GM12878 (cell line): ENCODE measurements at regions of chr9 and their contacts with region 1.

Region 1: DNA sequence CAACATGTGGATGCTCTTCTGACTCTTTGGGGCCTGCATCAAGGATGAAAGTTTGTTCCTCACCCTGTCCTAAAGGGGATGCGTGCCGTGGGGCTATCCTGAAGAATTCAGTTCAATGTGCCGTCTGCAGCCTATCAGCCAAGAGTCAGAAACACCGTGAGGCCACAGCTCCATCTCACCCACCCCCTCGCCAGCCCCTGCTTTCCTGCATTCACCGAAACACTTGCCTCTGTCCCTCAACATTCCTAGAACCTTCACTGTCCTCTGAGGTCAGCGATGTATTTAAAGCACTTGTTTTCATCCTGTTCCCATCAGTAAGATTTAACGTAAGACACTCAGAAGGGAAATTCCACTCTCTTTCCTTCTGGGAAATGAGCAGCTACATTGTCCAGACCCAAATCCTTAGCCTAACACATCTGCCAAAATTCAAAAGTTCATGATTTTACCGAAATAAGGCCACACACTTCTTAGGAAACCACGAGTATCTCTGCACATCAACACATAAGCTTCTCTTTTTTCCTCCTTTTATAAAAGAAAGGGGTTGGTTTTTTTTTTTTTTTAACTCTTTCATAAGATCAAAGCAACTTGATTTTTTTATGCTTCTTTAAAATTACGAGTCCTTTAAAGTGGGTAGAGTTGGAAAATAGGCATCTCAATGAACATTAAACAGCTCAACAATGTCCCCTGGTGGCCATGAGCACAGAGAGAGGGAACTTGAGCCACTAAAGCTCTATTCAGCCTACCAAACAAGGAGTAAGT is 100.7 kb downstream of the SUSD1 start:
- DNase-seq: peak; percentile 84
- ATAC-seq: peak; percentile 72
- H3K4me3 ChIP-seq: peak overlapping the region; percentile 4; the same call in 1 of the 2 replicates
- H3K27ac ChIP-seq: peak overlapping the region; percentile 73
- H3K4me1 ChIP-seq: peaks cover 66% of the 10 kb centered on the region
- H3K27me3 ChIP-seq: no peaks in the 10 kb centered on the region
- CTCF ChIP-seq: peak; percentile 91 to 97 (median 97)
- EP300 ChIP-seq: no peak
- POLR2A ChIP-seq: no peak
- RAD21 ChIP-seq: peak; percentile 99

Region 2: GRCh38 chr9:111759762-111760639 is 314.4 kb before region 1 on chr9:
- CTCF ChIA-PET with region 1: interaction called, 292 read pairs
- POLR2A ChIA-PET with region 1: interaction called, 5 read pairs
- RAD21 ChIA-PET with region 1: interaction called, 179 read pairs
- SMC1A ChIA-PET with region 1: interaction called, 226 read pairs
- in situ Hi-C with region 1: loop called (anchors 5 kb)
- intact Hi-C with region 1: loop called (anchors 1 kb)
- DNase-seq: peak; percentile 79
- ATAC-seq: peak; percentile 97
- H3K4me3 ChIP-seq: no peak overlapping the region
- H3K27ac ChIP-seq: no peak overlapping the region
- H3K4me1 ChIP-seq: no peaks in the 10 kb centered on the region
- H3K27me3 ChIP-seq: no peaks in the 10 kb centered on the region
- CTCF ChIP-seq: peak; percentile 51 to 73 (median 56); a peak in 4 of 6 replicates
- EP300 ChIP-seq: no peak
- POLR2A ChIP-seq: no peak
- RAD21 ChIP-seq: peak; percentile 95

Region 3: GRCh38 chr9:111916234-111916645 is 158.2 kb before region 1 on chr9:
- CTCF ChIA-PET with region 1: interaction called, 4 read pairs
- POLR2A ChIA-PET with region 1: interaction called, 3 read pairs
- RAD21 ChIA-PET with region 1: interaction called, 25 read pairs
- SMC1A ChIA-PET with region 1: interaction called, 27 read pairs
- in situ Hi-C with region 1: no loop called
- intact Hi-C with region 1: no loop called
- DNase-seq: no peak
- ATAC-seq: peak; percentile 67
- H3K4me3 ChIP-seq: peak overlapping the region; percentile 54; the same call in 1 of the 2 replicates
- H3K27ac ChIP-seq: peak overlapping the region; percentile 76
- H3K4me1 ChIP-seq: peaks cover 47% of the 10 kb centered on the region
- H3K27me3 ChIP-seq: no peaks in the 10 kb centered on the region
- CTCF ChIP-seq: no peak
- EP300 ChIP-seq: peak; percentile 42 to 60; a peak in 3 of 4 replicates
- POLR2A ChIP-seq: no peak
- RAD21 ChIP-seq: no peak

Region 4: DNA sequence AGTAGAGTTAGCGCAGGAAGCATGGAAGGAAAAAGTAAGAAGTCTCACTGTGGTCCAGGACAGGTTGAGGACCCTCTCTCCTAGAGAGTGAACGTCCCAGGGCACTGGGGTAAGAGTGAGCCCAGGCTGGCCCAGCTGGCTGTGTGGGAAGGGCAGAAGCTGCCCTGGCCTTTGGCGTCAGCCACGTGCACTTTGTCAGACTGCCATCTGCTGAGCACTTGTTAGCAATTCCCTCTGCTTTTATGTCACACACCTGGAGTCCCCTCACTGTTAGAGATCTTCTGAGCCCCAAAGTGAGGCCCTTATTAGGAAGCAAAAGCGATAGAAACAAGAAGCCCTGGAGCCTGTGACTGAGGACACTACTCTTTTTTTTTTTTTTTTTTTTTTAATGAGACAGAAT is 98.7 kb before region 1 on chr9:
- CTCF ChIA-PET with region 1: interaction called, 46 read pairs
- POLR2A ChIA-PET with region 1: interaction called, 3 read pairs
- RAD21 ChIA-PET with region 1: interaction called, 20 read pairs
- SMC1A ChIA-PET with region 1: interaction called, 22 read pairs
- in situ Hi-C with region 1: no loop called
- intact Hi-C with region 1: no loop called
- DNase-seq: peak; percentile 39
- ATAC-seq: peak; percentile 79
- H3K4me3 ChIP-seq: no peak overlapping the region
- H3K27ac ChIP-seq: no peak overlapping the region
- H3K4me1 ChIP-seq: peaks cover 12% of the 10 kb centered on the region
- H3K27me3 ChIP-seq: no peaks in the 10 kb centered on the region
- CTCF ChIP-seq: peak; percentile 4 to 51 (median 14); a peak in 2 of 6 replicates
- EP300 ChIP-seq: no peak
- POLR2A ChIP-seq: no peak
- RAD21 ChIP-seq: peak; percentile 57

Region 5: GRCh38 chr9:112020680-112021596 is 53.5 kb before region 1 on chr9:
- CTCF ChIA-PET with region 1: interaction called, 74 read pairs
- POLR2A ChIA-PET with region 1: no interaction called
- RAD21 ChIA-PET with region 1: interaction called, 339 read pairs
- SMC1A ChIA-PET with region 1: interaction called, 301 read pairs
- in situ Hi-C with region 1: no loop called
- intact Hi-C with region 1: no loop called
- DNase-seq: peak; percentile 80
- ATAC-seq: peak; percentile 68
- H3K4me3 ChIP-seq: peak overlapping the region; percentile 10; the same call in 1 of the 2 replicates
- H3K27ac ChIP-seq: peak overlapping the region; percentile 63
- H3K4me1 ChIP-seq: peaks cover 33% of the 10 kb centered on the region
- H3K27me3 ChIP-seq: no peaks in the 10 kb centered on the region
- CTCF ChIP-seq: no peak
- EP300 ChIP-seq: peak; percentile 69 to 75; a peak in 3 of 4 replicates
- POLR2A ChIP-seq: no peak
- RAD21 ChIP-seq: no peak

Region 6: GRCh38 chr9:112061152-112061740 is 13.2 kb before region 1 on chr9:
- CTCF ChIA-PET with region 1: interaction called, 11 read pairs
- POLR2A ChIA-PET with region 1: no interaction called
- RAD21 ChIA-PET with region 1: interaction called, 3 read pairs
- SMC1A ChIA-PET with region 1: interaction called, 18 read pairs
- in situ Hi-C with region 1: no loop called
- intact Hi-C with region 1: no loop called
- DNase-seq: peak; percentile 75
- ATAC-seq: peak; percentile 93
- H3K4me3 ChIP-seq: no peak overlapping the region
- H3K27ac ChIP-seq: peak overlapping the region; percentile 79
- H3K4me1 ChIP-seq: peaks cover 22% of the 10 kb centered on the region
- H3K27me3 ChIP-seq: no peaks in the 10 kb centered on the region
- CTCF ChIP-seq: no peak
- EP300 ChIP-seq: peak; percentile 30 to 90; a peak in 3 of 4 replicates
- POLR2A ChIP-seq: no peak
- RAD21 ChIP-seq: peak; percentile 12; the same call in 1 of the 2 replicates

Region 7: GRCh38 chr9:112125951-112126388 is 51.5 kb after region 1 on chr9:
- CTCF ChIA-PET with region 1: no interaction called
- POLR2A ChIA-PET with region 1: no interaction called
- RAD21 ChIA-PET with region 1: no interaction called
- SMC1A ChIA-PET with region 1: no interaction called
- in situ Hi-C with region 1: no loop called
- intact Hi-C with region 1: no loop called
- DNase-seq: no peak
- ATAC-seq: no peak
- H3K4me3 ChIP-seq: no peak overlapping the region
- H3K27ac ChIP-seq: no peak overlapping the region
- H3K4me1 ChIP-seq: no peaks in the 10 kb centered on the region
- H3K27me3 ChIP-seq: no peaks in the 10 kb centered on the region
- CTCF ChIP-seq: no peak
- EP300 ChIP-seq: no peak
- POLR2A ChIP-seq: no peak
- RAD21 ChIP-seq: no peak

Region 8: DNA sequence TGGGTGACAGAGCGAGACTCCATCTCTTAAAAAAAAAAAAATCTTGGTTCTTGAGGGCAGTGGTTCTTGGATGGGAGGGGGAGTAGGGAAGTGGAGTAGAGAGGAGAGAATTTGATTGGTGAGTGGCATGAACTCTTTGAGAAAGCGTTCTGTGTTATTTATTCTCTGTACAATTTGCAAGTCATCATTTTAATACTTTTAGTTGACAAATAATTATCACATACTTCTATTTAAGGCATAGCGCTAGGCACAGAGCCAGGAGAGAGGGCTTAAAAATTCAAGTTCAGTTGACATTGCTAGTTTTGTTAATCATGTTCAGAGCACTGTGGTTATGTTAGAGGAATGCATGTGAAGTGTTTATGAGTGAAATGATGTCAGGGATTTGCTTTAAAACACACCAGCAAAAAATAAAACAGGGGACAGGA is 330.1 kb after region 1 on chr9:
- CTCF ChIA-PET with region 1: no interaction called
- POLR2A ChIA-PET with region 1: no interaction called
- RAD21 ChIA-PET with region 1: no interaction called
- SMC1A ChIA-PET with region 1: no interaction called
- in situ Hi-C with region 1: no loop called
- intact Hi-C with region 1: no loop called
- DNase-seq: no peak
- ATAC-seq: no peak
- H3K4me3 ChIP-seq: no peak overlapping the region
- H3K27ac ChIP-seq: no peak overlapping the region
- H3K4me1 ChIP-seq: no peaks in the 10 kb centered on the region
- H3K27me3 ChIP-seq: no peaks in the 10 kb centered on the region
- CTCF ChIP-seq: no peak
- EP300 ChIP-seq: no peak
- POLR2A ChIP-seq: no peak
- RAD21 ChIP-seq: no peak